Testis (tissue), 5 donors: ENCODE measurements at regions of chr13 and their contacts with region 1.

Region 1: GRCh38 chr13:98653463-98653985 is 76.6 kb upstream of the STK24 start:
- DNase-seq: peak; percentile 88
- H3K4me3 ChIP-seq: no peak overlapping the region
- H3K27ac ChIP-seq: no peak overlapping the region
- H3K4me1 ChIP-seq: no peaks in the 10 kb centered on the region
- H3K27me3 ChIP-seq: no peaks in the 10 kb centered on the region
- CTCF ChIP-seq: peak; percentile 75 to 87 (median 85)
- POLR2A ChIP-seq: no peak

Region 2: GRCh38 chr13:98443329-98443728 is 210.2 kb before region 1 on chr13:
- intact Hi-C with region 1: loop called (anchors 5 kb)
- DNase-seq: no peak
- H3K4me3 ChIP-seq: no peak overlapping the region
- H3K27ac ChIP-seq: no peak overlapping the region
- H3K4me1 ChIP-seq: no peaks in the 10 kb centered on the region
- H3K27me3 ChIP-seq: no peaks in the 10 kb centered on the region
- CTCF ChIP-seq: no peak
- POLR2A ChIP-seq: no peak

Region 3: DNA sequence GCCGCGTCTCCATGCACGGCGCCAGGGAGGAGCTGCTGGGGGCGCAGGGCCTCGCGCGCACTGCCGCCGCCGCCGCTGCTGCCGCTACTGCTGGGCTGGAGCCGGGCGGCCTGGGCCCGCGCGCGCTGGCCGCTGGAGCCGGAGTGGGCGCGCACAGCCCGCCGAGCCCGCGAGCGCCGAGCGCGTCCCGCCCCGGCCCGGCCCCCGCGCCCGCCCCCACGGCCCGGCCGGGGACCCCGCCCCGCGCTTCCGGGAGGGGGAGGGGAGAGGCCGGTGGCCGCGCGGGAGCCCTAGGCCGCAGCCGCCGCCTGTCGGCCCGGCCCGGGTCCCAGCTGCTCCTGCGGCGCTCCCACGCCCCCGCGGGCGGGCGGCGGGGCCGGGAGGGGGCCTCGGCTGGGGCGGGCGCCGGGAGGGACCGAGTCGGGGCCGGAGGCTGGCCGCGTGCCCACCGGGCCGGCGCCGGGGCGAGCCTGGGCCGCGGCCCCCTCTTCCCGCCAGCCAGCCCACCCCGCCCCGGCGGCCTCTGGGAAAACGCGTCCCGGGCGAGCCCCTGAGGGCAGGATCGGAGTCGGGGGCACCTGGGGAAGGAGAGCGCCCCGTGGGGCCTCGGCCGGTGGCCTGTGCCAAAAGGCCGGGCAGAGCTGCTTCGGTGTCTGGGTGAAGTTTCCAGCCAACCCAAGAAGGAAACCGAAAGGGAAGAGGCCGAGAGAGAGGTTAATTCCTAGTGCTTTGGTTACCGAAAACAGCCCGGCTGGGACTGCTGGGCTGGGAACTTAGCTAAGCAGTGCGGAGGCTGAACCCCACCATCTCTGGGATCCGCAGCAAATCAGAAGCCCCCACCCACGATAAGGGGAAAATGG is 76.3 kb before region 1 on chr13 and contains the start of gene STK24:
- intact Hi-C with region 1: loop called (anchors 10 kb)
- DNase-seq: peak; percentile 58
- H3K4me3 ChIP-seq: peak within 1 kb of the TSS; percentile 91 to 94
- H3K27ac ChIP-seq: peak within 1 kb of the TSS; percentile 96 to 98
- H3K4me1 ChIP-seq: peaks cover 27% of the 10 kb centered on the region
- H3K27me3 ChIP-seq: no peaks in the 10 kb centered on the region
- CTCF ChIP-seq: no peak
- POLR2A ChIP-seq: no peak
- total RNA-seq, gene STK24: 151 to 172 TPM

Region 4: DNA sequence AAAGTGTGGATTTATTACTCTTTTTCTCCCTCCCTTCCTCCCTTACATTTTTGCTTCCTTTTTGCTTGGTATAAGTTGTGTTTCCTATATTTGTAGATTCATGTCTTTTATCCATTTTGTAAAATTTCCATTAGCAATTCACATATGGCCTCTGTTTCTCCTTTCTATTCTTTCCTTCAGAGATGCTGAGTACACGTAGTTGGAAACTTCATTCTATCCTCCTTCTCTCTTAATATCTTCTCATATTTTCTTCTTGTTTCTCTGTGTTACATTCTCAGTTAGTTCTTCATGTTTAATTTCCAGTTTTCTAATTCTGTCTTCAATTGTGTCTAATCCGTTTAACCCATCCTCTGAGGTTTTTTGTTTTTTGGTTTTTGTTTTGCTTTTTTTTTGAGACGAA is 1129.1 kb after region 1 on chr13:
- intact Hi-C with region 1: no loop called
- DNase-seq: no peak
- H3K4me3 ChIP-seq: no peak overlapping the region
- H3K27ac ChIP-seq: no peak overlapping the region
- H3K4me1 ChIP-seq: no peaks in the 10 kb centered on the region
- H3K27me3 ChIP-seq: no peaks in the 10 kb centered on the region
- CTCF ChIP-seq: no peak
- POLR2A ChIP-seq: no peak